Natural killer cell (primary cell): ENCODE measurements at regions of chr3 and their contacts with region 1.

Region 1: DNA sequence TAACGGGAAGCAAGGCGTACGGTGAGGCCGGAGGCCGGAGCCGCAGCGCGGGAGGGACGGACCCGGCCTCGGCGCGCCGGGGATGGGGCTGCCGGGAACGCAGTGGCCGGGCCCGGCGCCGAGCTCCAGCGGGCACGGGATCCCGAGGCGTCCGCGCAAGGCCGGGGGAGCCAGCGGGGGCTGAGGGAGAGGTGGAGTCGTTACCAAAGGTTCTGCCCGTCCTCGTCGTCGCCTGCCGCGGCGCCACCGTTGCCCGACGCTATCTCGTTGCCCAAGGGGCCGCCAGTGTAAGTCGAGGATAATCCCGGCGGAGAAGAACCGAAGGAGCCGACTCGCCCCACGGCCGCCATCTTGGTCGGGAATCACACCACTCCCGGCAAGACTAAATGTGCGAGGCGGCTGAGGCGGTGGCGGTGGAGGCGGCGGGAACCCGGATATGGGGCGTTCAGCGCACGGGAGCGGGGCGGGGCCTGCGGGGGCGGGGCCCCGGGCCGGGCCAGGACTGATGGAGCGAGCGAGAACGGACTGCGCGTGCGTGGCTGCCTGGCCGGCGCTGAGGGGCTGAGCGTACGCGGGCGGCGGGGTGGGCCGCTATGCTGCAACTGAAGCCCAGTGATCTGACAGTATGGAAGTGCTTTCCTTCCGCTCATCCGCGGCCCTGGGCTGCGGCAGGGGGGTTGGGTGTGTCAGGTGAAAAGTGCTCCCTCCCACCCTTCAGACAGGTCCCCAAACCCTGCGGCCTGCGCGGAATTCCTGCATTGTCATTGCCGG is at the start of gene DYNC1LI1:
- DNase-seq: peak; percentile 91 to 97
- ATAC-seq: peak; percentile 94 to 99 (median 96)
- H3K4me3 ChIP-seq: peak within 1 kb of the TSS; percentile 99
- H3K4me3 Mint-ChIP-seq: peak within 1 kb of the TSS; percentile 96
- H3K27ac ChIP-seq: peak within 1 kb of the TSS; percentile 89
- H3K27ac Mint-ChIP-seq: peak within 1 kb of the TSS; percentile 84 to 87
- H3K4me1 ChIP-seq: peaks cover 10% of the 10 kb centered on the region
- H3K4me1 Mint-ChIP-seq: peaks cover 12 to 32% of the 10 kb centered on the region in 2 donors
- H3K27me3 ChIP-seq: no peaks in the 10 kb centered on the region
- H3K27me3 Mint-ChIP-seq: peaks cover 0 to 5% of the 10 kb centered on the region in 2 donors
- CTCF ChIP-seq: no peak
- total RNA-seq, gene DYNC1LI1: 35.9 to 49.2 (median 39.9) TPM

Region 2: GRCh38 chr3:32502118-32502945 is 68.3 kb before region 1 on chr3 and contains the start of gene CMTM6:
- intact Hi-C with region 1: loop called (anchors 2 kb)
- DNase-seq: peak; percentile 70 to 89
- ATAC-seq: peak; percentile 87 to 92 (median 89)
- H3K4me3 ChIP-seq: peak within 1 kb of the TSS; percentile 62
- H3K4me3 Mint-ChIP-seq: peak within 1 kb of the TSS; percentile 90
- H3K27ac ChIP-seq: peak within 1 kb of the TSS; percentile 84
- H3K27ac Mint-ChIP-seq: peak within 1 kb of the TSS; percentile 84 to 92
- H3K4me1 ChIP-seq: peaks cover 10% of the 10 kb centered on the region
- H3K4me1 Mint-ChIP-seq: peaks cover 29 to 34% of the 10 kb centered on the region in 2 donors
- H3K27me3 ChIP-seq: no peaks in the 10 kb centered on the region
- H3K27me3 Mint-ChIP-seq: no peaks in the 10 kb centered on the region
- CTCF ChIP-seq: no peak
- total RNA-seq, gene CMTM6: 57.4 to 63.6 (median 59.5) TPM

Region 3: DNA sequence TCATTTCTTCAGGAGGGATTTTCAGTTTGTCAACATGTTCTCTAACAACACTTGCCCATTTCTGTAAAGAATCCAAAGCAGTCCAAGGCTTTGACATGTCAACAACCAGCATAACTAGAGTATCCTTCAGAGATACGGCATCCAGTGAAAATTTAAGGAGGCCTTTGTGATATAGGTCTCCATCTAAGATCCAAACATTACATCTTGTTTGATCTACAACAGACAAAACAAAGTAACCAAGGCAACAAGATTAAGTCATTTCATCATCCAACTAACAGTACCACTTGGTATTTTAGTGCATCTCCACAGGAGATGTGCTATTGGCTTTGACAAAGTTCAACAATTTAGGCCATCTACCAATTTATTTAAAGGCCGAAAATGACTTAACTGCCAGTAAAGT is 25.7 kb before region 1 on chr3:
- intact Hi-C with region 1: no loop called
- DNase-seq: no peak
- ATAC-seq: no peak
- H3K4me3 ChIP-seq: no peak overlapping the region
- H3K4me3 Mint-ChIP-seq: no peak overlapping the region
- H3K27ac ChIP-seq: no peak overlapping the region
- H3K27ac Mint-ChIP-seq: peak overlapping the region; percentile 49 to 70
- H3K4me1 ChIP-seq: no peaks in the 10 kb centered on the region
- H3K4me1 Mint-ChIP-seq: peaks cover 20 to 25% of the 10 kb centered on the region in 2 donors
- H3K27me3 ChIP-seq: no peaks in the 10 kb centered on the region
- H3K27me3 Mint-ChIP-seq: no peaks in the 10 kb centered on the region
- CTCF ChIP-seq: no peak

Region 4: GRCh38 chr3:33233884-33234283 is 663.3 kb after region 1 on chr3:
- intact Hi-C with region 1: no loop called
- DNase-seq: no peak
- ATAC-seq: no peak
- H3K4me3 ChIP-seq: no peak overlapping the region
- H3K4me3 Mint-ChIP-seq: no peak overlapping the region
- H3K27ac ChIP-seq: no peak overlapping the region
- H3K27ac Mint-ChIP-seq: no peak overlapping the region
- H3K4me1 ChIP-seq: no peaks in the 10 kb centered on the region
- H3K4me1 Mint-ChIP-seq: no peaks in the 10 kb centered on the region
- H3K27me3 ChIP-seq: no peaks in the 10 kb centered on the region
- H3K27me3 Mint-ChIP-seq: peaks cover 3 to 6% of the 10 kb centered on the region in 2 donors
- CTCF ChIP-seq: no peak